Psoas muscle (tissue), 8 donors: ENCODE measurements at regions of chr12 and their contacts with region 1.

Region 1: DNA sequence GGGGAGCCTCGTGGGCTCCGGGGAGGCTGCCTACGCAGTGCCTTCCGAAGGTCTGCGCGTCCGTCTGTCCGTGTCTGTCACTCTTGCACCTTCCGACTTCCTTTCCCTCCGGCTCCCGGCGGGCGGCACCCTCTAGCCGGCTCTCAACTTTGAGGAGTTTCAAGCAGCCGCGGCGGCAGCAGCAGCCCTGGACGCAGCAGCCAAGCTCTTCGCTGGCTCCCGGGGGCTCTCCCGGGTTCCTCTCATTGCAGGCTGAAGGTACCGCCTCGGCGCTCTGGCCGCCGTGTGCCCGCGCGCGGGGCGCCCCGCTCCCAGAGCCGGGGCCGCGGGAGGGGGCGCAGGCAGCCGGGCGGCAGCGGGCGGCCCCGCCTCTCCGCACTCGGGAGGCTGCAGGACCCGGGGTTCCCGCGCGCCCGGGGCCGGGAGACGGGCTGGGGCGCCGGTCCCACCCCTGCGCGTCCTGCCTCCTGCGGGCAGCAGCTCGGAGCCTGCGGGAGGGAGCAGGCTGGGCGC is at the starts of genes AMIGO2 and PCED1B:
- DNase-seq: peak; percentile 70 to 86
- ATAC-seq: peak; percentile 56 to 74 (median 66)
- H3K4me3 ChIP-seq: peak within 1 kb of the TSS; percentile 71
- H3K27ac ChIP-seq: peak within 1 kb of the TSS; percentile 63
- H3K4me1 ChIP-seq: peaks cover 13% of the 10 kb centered on the region
- H3K27me3 ChIP-seq: peaks cover 2 to 33% (median 3%) of the 10 kb centered on the region in 3 donors
- CTCF ChIP-seq: peak; percentile 16
- total RNA-seq, gene AMIGO2: 0.48 to 1.1 (median 0.59) TPM
- total RNA-seq, gene PCED1B: 0.19 to 1.2 (median 0.69) TPM

Region 2: DNA sequence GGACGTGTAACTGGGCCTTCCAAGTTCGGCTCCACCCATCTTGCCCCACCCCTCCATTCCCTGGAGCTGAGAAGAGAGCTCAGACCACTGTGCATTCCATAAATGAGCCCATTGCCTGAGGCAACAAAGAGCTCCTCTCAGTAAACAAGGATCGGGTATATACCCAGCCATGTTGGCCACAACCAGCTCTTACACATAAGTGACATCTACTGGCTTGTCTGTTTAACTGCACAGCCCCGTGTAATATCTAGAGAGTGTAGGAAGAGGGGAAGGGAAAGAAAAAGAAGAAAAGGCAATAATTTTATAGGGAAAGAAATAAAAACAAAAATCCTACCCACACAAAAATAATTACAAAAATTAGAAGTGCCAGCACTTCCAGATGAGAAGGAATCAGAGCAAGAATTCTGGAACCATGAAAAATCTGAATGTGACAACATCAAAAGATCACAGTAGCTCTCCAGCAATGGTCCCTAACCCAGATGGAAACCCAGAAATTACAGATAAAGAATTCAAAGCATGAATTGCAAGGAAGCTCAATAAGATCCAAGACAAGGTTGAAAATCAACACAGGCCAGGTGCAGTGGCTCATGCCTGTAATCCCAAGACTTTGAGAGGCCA is 318.2 kb after region 1 on chr12:
- intact Hi-C with region 1: loop called in 1 of 2 experiments (anchors 10 kb)
- DNase-seq: no peak
- ATAC-seq: peak in 3 of 4 donors; percentile 61 to 69 (median 66)
- H3K4me3 ChIP-seq: no peak overlapping the region
- H3K27ac ChIP-seq: no peak overlapping the region
- H3K4me1 ChIP-seq: peaks cover 10% of the 10 kb centered on the region
- H3K27me3 ChIP-seq: no peaks in the 10 kb centered on the region
- CTCF ChIP-seq: peak; percentile 43